Keratinocyte (primary cell): ENCODE measurements at regions of chr11 and their contacts with region 1.

Region 1: DNA sequence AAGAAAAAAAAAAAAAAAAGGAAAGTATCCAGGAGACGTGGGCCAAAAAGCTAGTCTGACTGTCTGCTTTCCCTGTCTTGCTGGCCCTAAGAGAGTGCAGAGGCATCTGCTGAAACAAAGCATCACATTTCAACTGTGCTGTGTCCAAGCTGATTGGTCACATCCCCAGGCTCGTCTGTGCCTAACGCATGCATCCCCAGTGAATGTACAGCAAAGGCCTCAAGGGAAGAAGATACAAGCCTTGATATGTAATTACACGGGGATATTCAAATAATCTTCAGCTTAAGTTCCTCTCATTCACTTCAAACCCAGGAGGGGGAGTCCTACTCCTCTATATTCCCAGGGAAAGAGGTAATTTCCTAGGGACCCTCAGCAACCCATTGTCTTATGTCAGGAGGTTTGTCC is 5.4 kb upstream of the SORL1 start:
- DNase-seq: no peak
- H3K4me3 ChIP-seq: no peak overlapping the region
- H3K27ac ChIP-seq: no peak overlapping the region
- H3K4me1 ChIP-seq: peaks cover 7% of the 10 kb centered on the region
- H3K27me3 ChIP-seq: no peaks in the 10 kb centered on the region
- CTCF ChIP-seq: peak in 2 of 3 experiments; percentile 2 to 31

Region 2: GRCh38 chr11:121321614-121322243 is 125.0 kb before region 1 on chr11:
- dilution Hi-C with region 1: loop called (anchors 10 kb)
- DNase-seq: no peak
- H3K4me3 ChIP-seq: no peak overlapping the region
- H3K27ac ChIP-seq: no peak overlapping the region
- H3K4me1 ChIP-seq: peaks cover 6% of the 10 kb centered on the region
- H3K27me3 ChIP-seq: no peaks in the 10 kb centered on the region
- CTCF ChIP-seq: peak; percentile 33 to 83 (median 44)

Region 3: GRCh38 chr11:121557348-121557747 is 110.6 kb after region 1 on chr11:
- dilution Hi-C with region 1: no loop called
- DNase-seq: no peak
- H3K4me3 ChIP-seq: no peak overlapping the region
- H3K27ac ChIP-seq: no peak overlapping the region
- H3K4me1 ChIP-seq: peaks cover 17% of the 10 kb centered on the region
- H3K27me3 ChIP-seq: no peaks in the 10 kb centered on the region
- CTCF ChIP-seq: no peak

Region 4: GRCh38 chr11:121810291-121810690 is 363.5 kb after region 1 on chr11:
- dilution Hi-C with region 1: no loop called
- DNase-seq: no peak
- H3K4me3 ChIP-seq: no peak overlapping the region
- H3K27ac ChIP-seq: no peak overlapping the region
- H3K4me1 ChIP-seq: no peaks in the 10 kb centered on the region
- H3K27me3 ChIP-seq: no peaks in the 10 kb centered on the region
- CTCF ChIP-seq: no peak